Heart right ventricle (tissue), 16 donors: ENCODE measurements at regions of chr12 and their contacts with region 1.

Region 1: DNA sequence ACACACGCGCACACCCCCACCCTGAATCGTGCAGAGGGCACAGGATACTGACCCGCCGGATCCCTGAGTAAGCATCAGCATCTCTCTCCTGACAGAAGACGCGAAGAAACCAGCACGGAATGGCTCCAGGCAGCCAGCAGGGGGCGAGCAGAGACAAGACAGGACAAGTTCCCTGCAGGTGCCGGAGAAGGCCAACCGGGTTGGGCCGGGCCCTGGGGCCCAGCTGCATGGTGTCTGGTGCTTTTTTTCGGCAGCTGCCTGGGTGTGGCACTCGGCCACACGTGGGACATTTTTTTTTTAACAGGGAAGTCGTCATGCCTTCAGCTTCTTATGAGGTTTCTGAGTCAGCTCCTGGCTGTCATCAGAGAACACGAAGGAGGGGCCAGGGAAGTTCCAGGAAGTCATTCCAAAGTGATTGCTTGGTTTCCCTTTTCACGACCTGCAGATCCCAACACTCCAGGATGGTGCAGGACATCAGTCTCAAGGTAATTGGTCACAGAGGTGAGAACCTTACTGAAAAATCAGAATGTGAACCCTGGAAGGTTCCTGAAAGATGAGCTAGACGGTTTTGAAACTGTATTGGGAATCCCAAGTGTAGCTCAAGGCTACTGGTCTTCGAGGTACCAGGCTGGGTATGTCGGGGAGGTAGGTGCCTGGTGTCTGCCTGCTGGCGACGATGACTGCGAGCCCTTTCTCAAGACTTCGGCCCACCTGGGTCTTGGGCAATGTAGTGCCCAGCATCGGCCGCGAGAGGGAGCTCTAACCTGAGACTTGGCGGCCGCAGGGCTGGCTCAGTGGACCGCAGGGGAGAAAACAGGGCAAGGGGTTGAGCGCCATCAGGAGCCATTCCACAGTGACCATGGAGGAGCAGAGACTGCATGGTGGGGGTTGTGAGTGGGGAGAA is 190.8 kb upstream of the PRMT8 start:
- DNase-seq: peak; percentile 87 to 90
- ATAC-seq: peak; percentile 57 to 84 (median 73)
- H3K4me3 ChIP-seq: peak overlapping the region in 5 of 10 donors; percentile 1 to 11 (median 2)
- H3K27ac ChIP-seq: peak overlapping the region in 5 of 10 donors; percentile 8 to 57 (median 26)
- H3K4me1 ChIP-seq: peaks cover 4 to 34% (median 25%) of the 10 kb centered on the region in 9 donors
- H3K27me3 ChIP-seq: no peaks in the 10 kb centered on the region
- CTCF ChIP-seq: peak; percentile 90 to 97 (median 95)

Region 2: GRCh38 chr12:2409656-2410265 is 890.4 kb before region 1 on chr12:
- intact Hi-C with region 1: loop called in 1 of 10 experiments (anchors 5 kb)
- DNase-seq: no peak
- ATAC-seq: no peak
- H3K4me3 ChIP-seq: no peak overlapping the region
- H3K27ac ChIP-seq: no peak overlapping the region
- H3K4me1 ChIP-seq: peaks cover 3 to 49% (median 14%) of the 10 kb centered on the region in 9 donors
- H3K27me3 ChIP-seq: no peaks in the 10 kb centered on the region
- CTCF ChIP-seq: no peak

Region 3: GRCh38 chr12:3261782-3262359 is 38.3 kb before region 1 on chr12:
- intact Hi-C with region 1: no loop called
- DNase-seq: no peak
- ATAC-seq: no peak
- H3K4me3 ChIP-seq: no peak overlapping the region
- H3K27ac ChIP-seq: peak overlapping the region in 9 of 10 donors; percentile 45 to 99 (median 76)
- H3K4me1 ChIP-seq: peaks cover 24 to 100% (median 90%) of the 10 kb centered on the region in 9 donors
- H3K27me3 ChIP-seq: no peaks in the 10 kb centered on the region
- CTCF ChIP-seq: peak in 1 of 9 donors; percentile 11

Region 4: GRCh38 chr12:3275171-3276041 is 24.8 kb before region 1 on chr12:
- intact Hi-C with region 1: no loop called
- DNase-seq: peak; percentile 71 to 83
- ATAC-seq: peak; percentile 25 to 81 (median 57)
- H3K4me3 ChIP-seq: no peak overlapping the region
- H3K27ac ChIP-seq: peak overlapping the region in 6 of 10 donors; percentile 71 to 87 (median 82)
- H3K4me1 ChIP-seq: peaks cover 23 to 97% (median 76%) of the 10 kb centered on the region in 9 donors
- H3K27me3 ChIP-seq: no peaks in the 10 kb centered on the region
- CTCF ChIP-seq: peak; percentile 97 to 100 (median 98)

Region 5: DNA sequence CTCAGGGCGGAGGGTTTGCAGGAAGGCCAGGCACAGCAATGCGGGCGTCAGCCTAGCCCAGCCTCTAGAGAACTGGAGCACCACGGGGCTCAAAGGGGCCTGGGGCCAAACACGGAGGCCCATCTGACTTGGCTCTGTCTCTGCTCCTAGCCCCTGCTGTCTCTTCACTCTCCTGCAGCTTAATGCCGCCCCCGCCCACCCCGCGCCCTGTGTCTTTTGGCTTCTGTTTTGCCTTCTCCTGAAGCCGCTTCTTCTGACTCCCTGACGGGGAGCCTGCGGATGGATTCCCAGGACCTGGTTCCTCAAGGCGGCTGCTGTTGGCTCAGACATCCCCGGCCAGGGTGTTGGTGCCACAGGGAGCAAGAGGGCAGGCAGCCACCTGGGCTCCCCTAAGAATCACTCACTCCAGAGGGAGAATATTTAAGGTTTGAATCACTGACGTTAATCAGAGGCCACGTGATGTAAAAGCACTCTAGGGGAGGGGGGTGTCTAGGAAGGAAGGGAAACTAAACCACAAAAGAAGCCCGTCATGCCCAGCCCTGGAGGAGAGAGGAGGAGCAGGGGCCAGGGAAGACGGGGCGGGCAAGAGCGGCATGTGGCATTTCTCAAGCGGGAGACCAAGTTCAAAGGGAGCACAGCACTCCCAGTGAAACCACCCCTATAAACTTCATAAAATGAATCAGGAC is 154.0 kb after region 1 on chr12:
- intact Hi-C with region 1: loop called in 4 of 10 experiments (anchors 5 to 10 kb)
- DNase-seq: no peak
- ATAC-seq: no peak
- H3K4me3 ChIP-seq: no peak overlapping the region
- H3K27ac ChIP-seq: no peak overlapping the region
- H3K4me1 ChIP-seq: no peaks in the 10 kb centered on the region
- H3K27me3 ChIP-seq: peaks cover 0 to 36% (median 16%) of the 10 kb centered on the region in 7 donors
- CTCF ChIP-seq: no peak

Region 6: GRCh38 chr12:3658327-3659163 is 358.4 kb after region 1 on chr12:
- intact Hi-C with region 1: loop called in 1 of 10 experiments (anchors 5 kb)
- DNase-seq: peak; percentile 27 to 35
- ATAC-seq: peak; percentile 45 to 63 (median 51)
- H3K4me3 ChIP-seq: no peak overlapping the region
- H3K27ac ChIP-seq: no peak overlapping the region
- H3K4me1 ChIP-seq: peaks cover 0 to 24% (median 13%) of the 10 kb centered on the region in 9 donors
- H3K27me3 ChIP-seq: no peaks in the 10 kb centered on the region
- CTCF ChIP-seq: peak; percentile 20 to 64 (median 47)

Region 7: GRCh38 chr12:3777206-3777809 is 477.1 kb after region 1 on chr12:
- intact Hi-C with region 1: loop called in 9 of 10 experiments (anchors 1 to 10 kb)
- DNase-seq: peak in 1 of 2 donors; percentile 29
- ATAC-seq: peak in 6 of 8 donors; percentile 58 to 82 (median 66)
- H3K4me3 ChIP-seq: no peak overlapping the region
- H3K27ac ChIP-seq: no peak overlapping the region
- H3K4me1 ChIP-seq: peaks cover 0 to 14% (median under 1%) of the 10 kb centered on the region in 9 donors
- H3K27me3 ChIP-seq: no peaks in the 10 kb centered on the region
- CTCF ChIP-seq: peak in 8 of 9 donors; percentile 31 to 80 (median 74)

Region 8: DNA sequence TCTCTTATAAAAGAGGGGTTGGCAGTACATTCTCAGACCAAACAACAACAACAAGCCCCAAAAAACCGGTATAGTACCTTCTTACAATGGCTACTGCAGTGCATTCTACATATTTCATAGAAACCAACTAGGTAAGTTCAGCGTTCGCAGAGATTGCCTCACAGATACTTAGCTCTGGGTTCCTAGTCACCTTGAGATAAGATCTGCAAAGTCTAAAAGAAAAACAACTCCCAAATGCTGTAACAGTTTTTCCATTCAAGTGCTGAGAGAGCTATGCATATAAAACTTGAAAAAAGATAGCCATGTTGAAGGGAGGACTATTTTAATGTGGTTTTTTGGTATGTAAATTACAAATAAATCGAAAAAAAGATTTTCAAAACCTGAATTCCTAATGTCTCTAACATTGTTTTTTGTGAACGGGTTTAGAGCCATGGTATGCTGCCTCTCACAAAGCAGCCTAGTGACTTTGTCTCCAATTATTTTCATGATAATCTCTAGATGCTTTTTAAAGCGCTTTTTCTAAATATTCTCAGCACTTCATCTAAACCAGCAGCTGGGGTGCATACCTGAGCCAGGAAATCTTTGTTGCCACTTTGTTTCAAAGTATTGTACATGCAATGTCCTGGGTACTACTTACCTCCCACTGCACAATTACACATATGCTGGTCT is 509.3 kb after region 1 on chr12:
- intact Hi-C with region 1: loop called in 8 of 10 experiments (anchors 1 to 10 kb)
- DNase-seq: no peak
- ATAC-seq: no peak
- H3K4me3 ChIP-seq: no peak overlapping the region
- H3K27ac ChIP-seq: no peak overlapping the region
- H3K4me1 ChIP-seq: no peaks in the 10 kb centered on the region
- H3K27me3 ChIP-seq: no peaks in the 10 kb centered on the region
- CTCF ChIP-seq: no peak